Breast epithelium (tissue), 4 donors: ENCODE measurements at regions of chr1 and their contacts with region 1.

Region 1: GRCh38 chr1:225318706-225319575 is 108.9 kb downstream of the LBR start:
- DNase-seq: no peak
- H3K4me3 ChIP-seq: no peak overlapping the region
- H3K27ac ChIP-seq: no peak overlapping the region
- H3K4me1 ChIP-seq: no peaks in the 10 kb centered on the region
- H3K27me3 ChIP-seq: no peaks in the 10 kb centered on the region
- CTCF ChIP-seq: peak; percentile 23 to 34 (median 32)
- POLR2A ChIP-seq: no peak

Region 2: DNA sequence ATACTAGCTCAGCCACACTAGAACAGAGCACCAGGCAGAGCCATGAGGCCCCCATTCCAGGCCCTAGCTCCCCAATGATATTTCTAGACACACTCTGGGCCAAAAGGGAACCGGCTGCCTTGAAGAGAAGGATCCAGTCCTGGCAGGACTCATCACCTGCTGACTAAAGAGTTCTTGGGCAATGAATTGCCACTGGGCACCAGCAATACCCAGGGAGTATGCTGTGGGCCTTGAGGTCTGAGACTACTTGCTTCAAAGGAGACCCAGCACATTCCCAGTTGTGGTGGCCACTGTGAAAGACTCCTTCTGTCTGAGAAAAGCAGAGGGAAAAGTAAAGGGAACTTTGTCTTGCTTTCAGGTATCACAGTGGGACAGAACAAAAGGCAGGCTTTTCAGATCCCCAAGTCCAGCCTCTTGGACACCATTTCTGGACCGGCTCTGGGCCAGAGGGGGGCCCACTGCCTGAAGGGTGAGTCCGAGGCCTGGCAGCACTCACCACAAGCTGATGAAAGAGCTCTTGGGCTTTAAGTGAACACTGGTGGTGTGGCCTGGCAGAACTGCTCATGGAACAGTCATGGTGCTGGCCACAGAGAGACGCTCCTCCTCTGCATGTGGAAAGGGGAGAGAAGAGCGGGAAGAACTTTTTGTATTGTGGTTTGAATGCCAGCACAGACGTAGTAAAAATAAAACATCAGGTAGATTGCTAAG is 1926.8 kb after region 1 on chr1:
- intact Hi-C with region 1: loop called (anchors 10 kb)
- DNase-seq: no peak
- H3K4me3 ChIP-seq: no peak overlapping the region
- H3K27ac ChIP-seq: peak overlapping the region in 1 of 2 donors; percentile 23
- H3K4me1 ChIP-seq: no peaks in the 10 kb centered on the region
- H3K27me3 ChIP-seq: no peaks in the 10 kb centered on the region
- CTCF ChIP-seq: no peak
- POLR2A ChIP-seq: no peak